ENCODE measurements at regions of chr4 and their contacts with region 1.

Region 1: GRCh38 chr4:81505004-81505598 is 33.4 kb upstream of the RASGEF1B start:
- DNase-seq: peak; percentile 48 to 60
- ATAC-seq: peak; percentile 50 to 91 (median 84)
- H3K4me3 ChIP-seq: peak overlapping the region in 4 of 10 donors; percentile 0 to 14 (median 12)
- H3K27ac ChIP-seq: peak overlapping the region; percentile 22 to 81 (median 57)
- H3K4me1 ChIP-seq: peaks cover 0 to 52% (median 7%) of the 10 kb centered on the region in 9 donors
- H3K27me3 ChIP-seq: no peaks in the 10 kb centered on the region
- CTCF ChIP-seq: peak in 2 of 9 donors; percentile 5 to 16

Region 2: DNA sequence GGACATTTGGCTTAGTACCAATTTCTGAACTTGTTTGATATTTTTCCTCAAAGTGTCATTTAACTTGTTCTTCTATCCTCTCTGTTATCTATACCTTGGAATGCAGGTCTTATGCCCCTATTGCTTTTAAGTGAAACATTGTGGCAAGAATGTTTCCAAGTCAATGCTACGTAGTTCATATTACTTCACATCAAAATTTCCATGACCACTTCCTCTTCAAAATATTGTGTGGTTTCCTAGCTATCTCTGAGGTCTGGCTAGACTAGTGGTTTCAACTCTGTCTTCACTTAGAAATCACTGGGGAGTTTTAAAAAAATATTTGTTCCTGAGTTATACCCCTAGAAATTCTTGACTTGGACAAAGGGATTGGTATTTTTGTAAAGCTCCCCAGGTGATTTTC is 13.2 kb before region 1 on chr4:
- intact Hi-C with region 1: loop called in 1 of 10 experiments (anchors 1 kb)
- DNase-seq: no peak
- ATAC-seq: peak in 6 of 8 donors; percentile 42 to 84 (median 67)
- H3K4me3 ChIP-seq: no peak overlapping the region
- H3K27ac ChIP-seq: peak overlapping the region in 1 of 10 donors; percentile 81
- H3K4me1 ChIP-seq: peaks cover 0 to 49% (median 3%) of the 10 kb centered on the region in 9 donors
- H3K27me3 ChIP-seq: no peaks in the 10 kb centered on the region
- CTCF ChIP-seq: no peak

Region 3: DNA sequence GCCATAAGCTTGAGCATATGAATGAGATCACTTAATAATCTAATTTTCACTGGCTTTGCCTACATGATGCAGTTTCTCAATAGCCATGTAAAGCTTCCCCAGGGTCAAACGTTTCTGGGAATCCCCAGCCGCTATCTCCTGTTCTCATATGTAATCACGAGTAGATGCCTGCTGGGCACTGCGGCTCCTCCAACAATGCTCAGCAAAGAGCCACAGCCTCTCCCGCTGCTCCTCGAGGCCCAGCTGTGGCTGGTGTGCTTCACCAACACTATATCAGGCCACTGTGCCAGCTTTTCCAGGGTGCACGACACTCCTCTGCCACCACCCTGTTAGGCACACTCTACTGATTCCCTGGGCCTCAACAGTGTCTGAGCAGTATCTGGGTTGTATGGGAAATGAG is 44.9 kb after region 1 on chr4:
- intact Hi-C with region 1: loop called in 1 of 10 experiments (anchors 2 kb)
- DNase-seq: no peak
- ATAC-seq: peak in 5 of 8 donors; percentile 29 to 57 (median 37)
- H3K4me3 ChIP-seq: no peak overlapping the region
- H3K27ac ChIP-seq: peak overlapping the region in 3 of 10 donors; percentile 10 to 41 (median 11)
- H3K4me1 ChIP-seq: peaks cover 0 to 27% (median 3%) of the 10 kb centered on the region in 9 donors
- H3K27me3 ChIP-seq: no peaks in the 10 kb centered on the region
- CTCF ChIP-seq: no peak

Region 4: GRCh38 chr4:81577392-81577791 is 72.3 kb after region 1 on chr4:
- intact Hi-C with region 1: no loop called
- DNase-seq: no peak
- ATAC-seq: no peak
- H3K4me3 ChIP-seq: no peak overlapping the region
- H3K27ac ChIP-seq: no peak overlapping the region
- H3K4me1 ChIP-seq: no peaks in the 10 kb centered on the region
- H3K27me3 ChIP-seq: no peaks in the 10 kb centered on the region
- CTCF ChIP-seq: no peak

Region 5: DNA sequence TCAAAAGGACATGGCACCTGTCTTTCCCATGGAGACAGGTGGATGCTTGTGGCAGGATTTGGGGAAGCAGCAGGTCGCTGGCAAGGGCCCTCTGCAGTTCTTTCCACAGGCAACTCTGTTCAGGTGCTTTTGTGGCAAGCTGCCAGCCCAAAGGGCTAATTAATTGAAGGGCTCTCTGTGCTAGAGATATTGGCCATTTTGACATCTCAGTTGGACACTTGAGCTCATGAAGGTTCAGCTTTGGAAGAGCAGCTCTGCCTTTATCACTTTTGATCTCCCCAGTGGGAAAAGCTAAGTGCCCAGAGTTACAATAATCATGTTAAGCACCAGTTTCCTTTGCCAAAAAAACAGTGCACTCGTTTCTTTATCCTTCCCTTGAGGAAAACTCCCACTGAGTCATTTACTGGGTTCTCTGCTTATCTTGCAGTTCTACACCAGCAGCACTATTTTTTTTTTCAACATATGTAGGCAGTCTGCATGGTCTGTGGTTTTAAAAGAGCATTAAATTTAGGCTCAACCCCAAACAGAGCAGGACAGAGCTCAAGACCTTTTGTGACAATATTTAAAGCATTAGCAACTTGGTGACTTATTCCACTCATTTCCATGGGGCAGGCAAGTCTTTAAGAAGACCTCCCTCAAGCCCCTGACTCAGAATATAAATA is 303.0 kb after region 1 on chr4:
- intact Hi-C with region 1: no loop called
- DNase-seq: no peak
- ATAC-seq: no peak
- H3K4me3 ChIP-seq: no peak overlapping the region
- H3K27ac ChIP-seq: no peak overlapping the region
- H3K4me1 ChIP-seq: peaks cover 0 to 8% (median 0%) of the 10 kb centered on the region in 9 donors
- H3K27me3 ChIP-seq: peaks cover 0 to 5% (median 0%) of the 10 kb centered on the region in 7 donors
- CTCF ChIP-seq: no peak